Left ventricle myocardium inferior (tissue), 1 donor: ENCODE measurements at regions of chr4 and their contacts with region 1.

Region 1: GRCh38 chr4:71713611-71714203 is 70.2 kb downstream of the GC start:
- DNase-seq: no peak
- H3K4me3 ChIP-seq: no peak overlapping the region
- H3K27ac ChIP-seq: no peak overlapping the region
- H3K4me1 ChIP-seq: no peaks in the 10 kb centered on the region
- H3K27me3 ChIP-seq: no peaks in the 10 kb centered on the region
- CTCF ChIP-seq: peak; percentile 68

Region 2: GRCh38 chr4:71184195-71184781 is 529.4 kb before region 1 on chr4:
- intact Hi-C with region 1: loop called (anchors 10 kb)
- DNase-seq: no peak
- H3K4me3 ChIP-seq: no peak overlapping the region
- H3K27ac ChIP-seq: no peak overlapping the region
- H3K4me1 ChIP-seq: peaks cover 31% of the 10 kb centered on the region
- H3K27me3 ChIP-seq: peaks cover 22% of the 10 kb centered on the region
- CTCF ChIP-seq: peak; percentile 70

Region 3: DNA sequence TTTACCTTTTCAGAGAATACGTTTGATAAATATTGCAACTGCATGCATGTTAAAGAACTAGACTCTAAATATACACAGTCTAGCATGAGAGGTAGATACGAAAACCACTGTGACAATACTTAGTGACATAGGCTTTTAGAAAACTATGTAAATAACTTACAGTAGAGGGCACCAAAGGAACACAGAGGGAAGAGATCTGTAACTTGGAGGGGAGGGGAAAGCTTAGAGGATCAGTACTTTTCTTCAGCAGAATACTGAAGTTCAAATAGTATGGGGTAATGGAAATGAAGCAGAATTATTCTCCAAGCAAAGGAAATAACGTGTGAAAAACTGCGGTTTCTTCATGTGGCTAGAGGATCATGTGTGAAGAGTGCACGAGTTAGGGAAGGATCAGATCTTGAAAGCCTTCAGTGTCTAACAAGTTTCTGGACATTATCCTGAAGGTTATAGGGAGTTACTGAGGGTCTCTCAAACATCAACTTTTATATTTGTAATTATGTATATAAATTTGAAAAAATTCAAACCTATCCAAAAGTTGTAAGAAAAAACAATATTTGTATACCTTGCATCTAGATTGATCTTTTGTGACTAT is 582.4 kb after region 1 on chr4:
- intact Hi-C with region 1: no loop called
- DNase-seq: no peak
- H3K4me3 ChIP-seq: no peak overlapping the region
- H3K27ac ChIP-seq: no peak overlapping the region
- H3K4me1 ChIP-seq: no peaks in the 10 kb centered on the region
- H3K27me3 ChIP-seq: no peaks in the 10 kb centered on the region
- CTCF ChIP-seq: peak; percentile 75